ENCODE measurements at regions of chr4 and their contacts with region 1.

Region 1: GRCh38 chr4:183848805-183849204 is 56.3 kb upstream of the STOX2 start:
- DNase-seq: no peak
- H3K4me3 ChIP-seq: no peak overlapping the region
- H3K27ac ChIP-seq: no peak overlapping the region
- H3K4me1 ChIP-seq: no peaks in the 10 kb centered on the region
- H3K27me3 ChIP-seq: no peaks in the 10 kb centered on the region
- CTCF ChIP-seq: no peak
- POLR2A ChIP-seq: no peak

Region 2: DNA sequence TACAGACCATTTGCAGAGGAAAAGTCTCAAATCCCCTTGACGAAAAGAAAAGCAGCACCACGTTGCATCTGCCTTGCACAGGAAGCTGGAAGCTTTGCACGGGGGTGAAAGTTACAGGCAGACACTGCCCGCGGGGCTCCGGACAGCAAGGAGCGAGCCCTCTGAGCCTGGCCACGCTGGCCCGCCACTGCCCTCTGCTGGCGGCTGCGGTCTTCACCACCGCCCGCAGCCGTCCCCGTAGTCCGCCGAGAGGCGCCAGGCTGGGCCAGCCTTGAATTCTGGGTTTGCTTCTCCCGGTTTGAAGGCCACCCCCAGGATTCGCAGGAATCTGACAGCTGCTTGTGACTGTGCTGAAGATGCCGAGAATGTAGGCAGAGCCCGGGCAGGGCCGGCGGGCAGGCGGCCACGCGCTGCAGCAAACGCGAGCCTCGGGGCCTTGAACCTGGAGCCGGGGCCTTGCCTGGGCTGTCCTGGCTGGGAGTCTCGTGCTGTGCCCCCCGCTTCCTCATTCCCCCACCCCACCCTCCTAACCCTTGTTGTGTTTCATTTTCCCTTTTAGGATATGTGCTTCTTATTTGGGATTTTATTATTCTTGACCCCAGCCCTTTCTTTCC is 319.7 kb after region 1 on chr4:
- intact Hi-C with region 1: loop called (anchors 5 kb)
- DNase-seq: peak; percentile 43 to 63
- H3K4me3 ChIP-seq: peak overlapping the region in 2 of 3 donors; percentile 16 to 37
- H3K27ac ChIP-seq: no peak overlapping the region
- H3K4me1 ChIP-seq: no peaks in the 10 kb centered on the region
- H3K27me3 ChIP-seq: no peaks in the 10 kb centered on the region
- CTCF ChIP-seq: peak; percentile 55 to 90 (median 87)
- POLR2A ChIP-seq: no peak

Region 3: GRCh38 chr4:184364100-184364921 is 515.5 kb after region 1 on chr4:
- intact Hi-C with region 1: no loop called
- DNase-seq: no peak
- H3K4me3 ChIP-seq: no peak overlapping the region
- H3K27ac ChIP-seq: no peak overlapping the region
- H3K4me1 ChIP-seq: peaks cover 0 to 6% of the 10 kb centered on the region in 2 donors
- H3K27me3 ChIP-seq: no peaks in the 10 kb centered on the region
- CTCF ChIP-seq: no peak
- POLR2A ChIP-seq: no peak

Measured in breast epithelium (tissue), 4 donors.